ENCODE measurements at regions of chr14 and their contacts with region 1.

Region 1: DNA sequence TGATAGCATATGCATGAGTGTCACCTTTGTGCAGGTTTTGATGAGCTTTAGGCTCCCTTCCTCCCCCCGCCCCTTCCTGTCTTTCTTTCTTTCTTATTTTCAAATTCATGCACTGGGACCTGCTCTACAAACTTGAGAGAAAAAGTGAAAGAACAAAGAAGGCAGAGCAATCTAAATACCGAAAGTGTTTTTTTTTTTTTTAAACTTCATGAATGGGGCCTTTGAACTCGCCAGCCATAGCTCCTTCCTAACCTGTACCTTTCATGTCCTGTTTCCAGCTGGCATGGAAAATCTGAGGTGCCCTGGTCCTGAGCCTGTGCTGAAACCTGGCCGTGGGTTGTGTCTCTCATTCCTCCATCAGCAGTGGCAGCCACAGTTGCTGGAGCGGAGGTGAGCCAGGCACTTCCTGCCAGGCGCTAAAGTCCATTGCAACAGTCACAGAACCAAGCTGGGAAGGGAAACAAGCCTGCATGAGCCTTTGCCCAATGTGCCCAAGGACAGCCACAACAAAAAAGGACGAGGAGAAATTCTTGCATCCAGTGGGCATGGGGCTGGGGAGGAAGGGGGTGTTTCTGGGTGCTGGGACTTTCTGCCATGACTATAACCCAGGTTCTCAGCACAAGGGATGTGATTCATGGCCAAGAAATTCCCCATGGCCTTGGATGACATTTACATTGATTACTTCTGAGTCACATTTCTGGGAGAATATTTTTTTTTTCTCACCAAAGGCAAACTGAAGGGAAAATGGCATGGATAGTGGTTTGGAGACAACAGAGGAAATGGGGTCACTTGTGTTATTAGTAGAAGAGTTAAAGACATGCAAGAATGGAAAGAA is 102.7 kb downstream of the TMEM30B start:
- DNase-seq: peak; percentile 78
- H3K4me3 Mint-ChIP-seq: peak overlapping the region; percentile 41
- H3K27ac Mint-ChIP-seq: peak overlapping the region; percentile 94
- H3K4me1 Mint-ChIP-seq: peaks cover 57% of the 10 kb centered on the region
- H3K27me3 Mint-ChIP-seq: peaks cover 6% of the 10 kb centered on the region

Region 2: DNA sequence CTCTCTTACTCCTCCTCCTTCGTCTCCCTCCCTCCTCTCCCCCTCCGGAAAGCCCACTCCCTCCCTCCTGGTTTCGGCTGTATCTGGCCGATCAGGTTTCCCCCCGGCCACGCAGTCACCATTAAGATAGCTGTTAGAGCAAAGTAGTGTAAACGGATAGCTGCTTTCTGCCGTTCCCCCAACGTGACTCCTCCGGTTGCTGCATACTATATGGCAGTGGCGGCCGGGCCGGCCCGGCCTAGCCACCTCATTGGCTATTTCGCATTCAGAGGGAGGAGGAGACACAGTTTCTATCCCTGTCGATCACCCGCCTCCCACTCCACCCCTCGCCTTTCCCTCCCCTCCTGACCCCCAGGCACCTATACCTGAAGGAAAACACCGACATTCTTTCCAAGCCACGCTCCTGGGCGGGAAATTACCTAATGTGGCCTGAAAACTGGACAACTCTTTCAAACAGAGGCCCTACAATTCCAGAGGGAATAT is 454.3 kb before region 1 on chr14 and contains the start of gene SIX4:
- CTCF ChIA-PET with region 1: no interaction called
- intact Hi-C with region 1: loop called (anchors 5 kb)
- DNase-seq: peak; percentile 15
- H3K4me3 Mint-ChIP-seq: peak within 1 kb of the TSS; percentile 78
- H3K27ac Mint-ChIP-seq: no peak within 1 kb of the TSS
- H3K4me1 Mint-ChIP-seq: peaks cover 19% of the 10 kb centered on the region
- H3K27me3 Mint-ChIP-seq: peaks cover 71% of the 10 kb centered on the region
- total RNA-seq, gene SIX4: not detected

Region 3: GRCh38 chr14:60980811-60981632 is 197.4 kb before region 1 on chr14 and contains the starts of genes SLC38A6 and TRMT5:
- CTCF ChIA-PET with region 1: interaction called, 3 read pairs
- intact Hi-C with region 1: loop called (anchors 1 kb)
- DNase-seq: peak; percentile 95
- H3K4me3 Mint-ChIP-seq: no peak within 1 kb of the TSS
- H3K27ac Mint-ChIP-seq: no peak within 1 kb of the TSS
- H3K4me1 Mint-ChIP-seq: peaks cover 31% of the 10 kb centered on the region
- H3K27me3 Mint-ChIP-seq: no peaks in the 10 kb centered on the region
- total RNA-seq, gene SLC38A6: 4.1 to 4.3 TPM
- total RNA-seq, gene TRMT5: 13.9 to 18.3 TPM

Region 4: DNA sequence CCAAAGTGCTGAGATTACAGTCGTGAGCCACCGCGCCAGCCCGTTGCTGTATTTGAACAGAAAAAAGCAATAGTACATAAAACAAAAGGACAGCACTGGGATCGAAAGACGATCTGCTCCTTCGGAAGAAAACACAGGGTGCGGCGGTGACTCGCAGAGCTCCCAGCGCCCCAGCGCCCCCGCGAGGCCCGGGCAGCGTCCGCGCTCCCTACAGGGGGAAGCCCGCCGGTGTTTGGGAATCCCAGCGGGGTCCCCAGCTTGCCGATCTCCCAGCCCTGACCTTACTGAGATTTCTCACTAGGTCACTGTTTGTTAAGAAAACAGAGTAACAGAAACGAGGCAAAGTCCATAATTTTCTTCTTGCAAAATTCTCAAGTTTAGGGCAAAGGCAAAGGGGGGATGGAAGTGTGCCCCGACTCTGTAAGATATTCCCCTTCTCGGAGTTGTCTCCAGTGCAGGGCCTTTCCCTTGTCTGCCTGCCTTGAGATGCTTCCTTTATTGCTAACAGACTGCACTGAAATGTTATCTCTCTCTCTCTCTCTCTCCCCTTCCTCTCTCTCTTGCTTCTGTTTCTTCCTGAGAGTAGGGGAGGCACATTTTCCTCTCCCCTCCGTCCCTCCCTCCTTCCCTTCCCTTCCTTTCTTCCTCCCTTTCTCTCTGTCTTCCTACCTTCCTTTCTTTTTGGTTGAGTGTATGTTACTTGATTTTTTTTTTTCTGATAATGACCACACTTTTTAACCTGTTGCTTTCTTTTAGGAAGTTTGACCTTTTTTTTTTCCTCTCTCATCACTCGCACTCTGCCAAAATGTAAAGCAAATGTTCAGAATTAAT is 10.8 kb after region 1 on chr14:
- CTCF ChIA-PET with region 1: interaction called, 4 read pairs
- intact Hi-C with region 1: loop called (anchors 1 kb)
- DNase-seq: peak; percentile 76
- H3K4me3 Mint-ChIP-seq: peak overlapping the region; percentile 70
- H3K27ac Mint-ChIP-seq: peak overlapping the region; percentile 53
- H3K4me1 Mint-ChIP-seq: peaks cover 15% of the 10 kb centered on the region
- H3K27me3 Mint-ChIP-seq: peaks cover 36% of the 10 kb centered on the region

Region 5: DNA sequence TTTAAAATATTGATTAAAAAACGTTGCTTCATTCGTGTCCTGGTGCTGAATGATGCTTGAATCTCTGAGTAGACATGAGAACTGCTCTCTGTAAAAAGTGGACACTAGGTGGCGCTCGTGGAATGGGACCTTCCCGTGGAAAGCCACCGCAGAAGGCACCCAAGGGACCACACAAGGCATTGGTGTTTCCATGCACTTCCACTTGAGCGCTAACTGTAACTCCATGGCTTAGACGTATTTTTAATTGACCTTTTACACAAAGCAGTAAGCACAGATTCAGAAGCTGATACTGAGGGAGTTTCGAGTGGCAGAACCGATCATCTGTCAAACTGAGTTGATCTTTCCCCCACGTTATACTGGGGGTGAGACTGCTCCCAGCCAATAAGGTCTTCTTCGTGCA is 278.3 kb after region 1 on chr14:
- CTCF ChIA-PET with region 1: no interaction called
- intact Hi-C with region 1: loop called (anchors 5 kb)
- DNase-seq: peak; percentile 94
- H3K4me3 Mint-ChIP-seq: no peak overlapping the region
- H3K27ac Mint-ChIP-seq: peak overlapping the region; percentile 66
- H3K4me1 Mint-ChIP-seq: peaks cover 82% of the 10 kb centered on the region
- H3K27me3 Mint-ChIP-seq: no peaks in the 10 kb centered on the region

Measured in activated naive CD4-positive, alpha-beta T cell treated with anti-CD3 and anti-CD28 coated beads for 36 hours (primary cell).